Heart left ventricle (tissue), 16 donors: ENCODE measurements at regions of chr7 and their contacts with region 1.

Region 1: GRCh38 chr7:128739048-128739962 is at the start of gene CALU:
- DNase-seq: peak; percentile 97 to 98 (median 98)
- ATAC-seq: peak; percentile 98 to 99 (median 98)
- H3K4me3 ChIP-seq: peak within 1 kb of the TSS; percentile 83 to 99 (median 94)
- H3K27ac ChIP-seq: peak within 1 kb of the TSS; percentile 30 to 98 (median 94)
- H3K4me1 ChIP-seq: peaks cover 7 to 61% (median 47%) of the 10 kb centered on the region in 12 donors
- H3K27me3 ChIP-seq: no peaks in the 10 kb centered on the region
- CTCF ChIP-seq: no peak
- POLR2A ChIP-seq: peak; percentile 88 to 92
- total RNA-seq, gene CALU: 172 to 689 (median 257) TPM

Region 2: DNA sequence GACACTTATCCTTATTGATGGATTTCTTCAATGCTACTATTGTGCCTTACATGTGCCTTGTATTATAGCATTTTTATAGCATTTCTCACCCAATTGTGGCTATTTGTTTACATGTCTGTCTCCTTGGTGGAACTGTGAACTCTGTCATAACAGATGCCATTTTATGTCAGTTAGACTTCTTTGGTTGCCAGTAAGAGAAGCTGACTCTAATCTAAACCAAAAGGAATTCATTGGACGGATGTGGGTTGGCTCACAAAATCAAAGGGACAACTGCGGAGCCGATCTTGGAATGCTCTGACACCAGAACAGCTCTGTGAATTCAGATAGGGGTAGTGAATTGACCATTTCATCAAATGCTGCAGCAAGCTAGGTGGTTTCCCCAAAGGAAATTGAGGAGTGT is 52.2 kb before region 1 on chr7:
- intact Hi-C with region 1: no loop called
- DNase-seq: no peak
- ATAC-seq: no peak
- H3K4me3 ChIP-seq: no peak overlapping the region
- H3K27ac ChIP-seq: no peak overlapping the region
- H3K4me1 ChIP-seq: no peaks in the 10 kb centered on the region
- H3K27me3 ChIP-seq: no peaks in the 10 kb centered on the region
- CTCF ChIP-seq: no peak
- POLR2A ChIP-seq: no peak

Region 3: DNA sequence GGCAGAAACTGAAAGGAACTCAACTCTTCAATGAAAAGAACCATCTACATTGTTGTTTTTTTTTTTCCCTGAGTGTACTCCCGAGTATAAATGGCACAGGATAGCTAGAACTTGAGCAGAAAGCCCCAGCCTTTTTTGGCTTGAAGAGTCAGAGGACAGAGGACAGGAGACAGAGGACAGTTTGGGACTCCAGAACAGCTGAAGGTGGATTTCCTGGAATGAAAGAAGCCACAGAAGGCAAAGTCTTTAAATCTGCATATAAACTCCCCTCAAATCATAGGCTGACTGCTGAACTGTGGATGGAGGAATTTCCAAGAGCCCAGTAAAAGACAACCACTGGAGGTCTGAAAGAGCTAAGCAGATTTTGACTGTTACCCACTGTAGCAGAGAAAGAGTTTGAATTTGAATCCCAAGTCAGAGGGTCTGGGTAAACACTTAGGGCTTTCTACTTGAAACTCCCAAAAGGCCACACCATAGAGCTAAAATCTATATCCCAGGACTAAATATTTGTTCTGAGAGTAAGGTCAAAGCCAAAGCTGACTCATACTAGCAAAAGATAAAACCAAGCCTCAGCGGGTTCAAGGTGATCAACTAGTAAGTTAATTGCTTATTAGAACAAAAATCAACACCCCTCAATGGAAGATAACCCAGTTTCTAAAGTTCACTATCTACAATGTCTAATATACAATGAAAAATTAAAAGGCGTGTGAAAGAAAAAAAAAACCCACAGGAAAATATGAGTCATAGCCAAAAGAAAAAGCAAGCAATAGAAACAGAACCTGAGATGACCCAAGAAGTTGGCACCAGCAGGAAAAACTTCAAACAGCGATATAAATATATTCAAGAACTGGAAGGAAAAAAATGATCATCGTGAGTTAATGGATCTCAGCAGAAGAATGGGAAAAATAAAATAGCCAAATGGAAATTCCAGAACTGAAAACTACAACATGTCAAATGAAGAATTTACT is 38.1 kb after region 1 on chr7:
- intact Hi-C with region 1: no loop called
- DNase-seq: no peak
- ATAC-seq: no peak
- H3K4me3 ChIP-seq: no peak overlapping the region
- H3K27ac ChIP-seq: no peak overlapping the region
- H3K4me1 ChIP-seq: peaks cover 0 to 10% (median 0%) of the 10 kb centered on the region in 12 donors
- H3K27me3 ChIP-seq: no peaks in the 10 kb centered on the region
- CTCF ChIP-seq: no peak
- POLR2A ChIP-seq: no peak

Region 4: GRCh38 chr7:128830231-128831177 is 91.2 kb after region 1 on chr7 and contains the start of gene FLNC:
- intact Hi-C with region 1: loop called in 4 of 10 experiments (anchors 2 to 5 kb)
- DNase-seq: peak; percentile 71 to 81 (median 78)
- ATAC-seq: peak in 2 of 4 donors; percentile 5 to 23
- H3K4me3 ChIP-seq: peak within 1 kb of the TSS; percentile 31 to 94 (median 80)
- H3K27ac ChIP-seq: peak within 1 kb of the TSS; percentile 84 to 100 (median 96)
- H3K4me1 ChIP-seq: peaks cover 0 to 76% (median 45%) of the 10 kb centered on the region in 12 donors
- H3K27me3 ChIP-seq: peaks cover 0 to 31% (median 0%) of the 10 kb centered on the region in 9 donors
- CTCF ChIP-seq: no peak
- POLR2A ChIP-seq: peak; percentile 72 to 96
- total RNA-seq, gene FLNC: 721 to 3,687 (median 1,170) TPM

Region 5: GRCh38 chr7:128862571-128863432 is 123.5 kb after region 1 on chr7 and contains the start of gene ATP6V1F:
- intact Hi-C with region 1: loop called in 6 of 10 experiments (anchors 5 to 10 kb)
- DNase-seq: peak; percentile 97 to 100 (median 98)
- ATAC-seq: peak; percentile 80 to 87 (median 84)
- H3K4me3 ChIP-seq: peak within 1 kb of the TSS; percentile 39 to 91 (median 82)
- H3K27ac ChIP-seq: peak within 1 kb of the TSS in 11 of 12 donors; percentile 47 to 87 (median 73)
- H3K4me1 ChIP-seq: peaks cover 3 to 58% (median 43%) of the 10 kb centered on the region in 12 donors
- H3K27me3 ChIP-seq: no peaks in the 10 kb centered on the region
- CTCF ChIP-seq: peak in 1 of 12 donors; percentile 5
- POLR2A ChIP-seq: peak in 1 of 2 donors; percentile 79
- total RNA-seq, gene ATP6V1F: 91.6 to 165 (median 121) TPM

Region 6: DNA sequence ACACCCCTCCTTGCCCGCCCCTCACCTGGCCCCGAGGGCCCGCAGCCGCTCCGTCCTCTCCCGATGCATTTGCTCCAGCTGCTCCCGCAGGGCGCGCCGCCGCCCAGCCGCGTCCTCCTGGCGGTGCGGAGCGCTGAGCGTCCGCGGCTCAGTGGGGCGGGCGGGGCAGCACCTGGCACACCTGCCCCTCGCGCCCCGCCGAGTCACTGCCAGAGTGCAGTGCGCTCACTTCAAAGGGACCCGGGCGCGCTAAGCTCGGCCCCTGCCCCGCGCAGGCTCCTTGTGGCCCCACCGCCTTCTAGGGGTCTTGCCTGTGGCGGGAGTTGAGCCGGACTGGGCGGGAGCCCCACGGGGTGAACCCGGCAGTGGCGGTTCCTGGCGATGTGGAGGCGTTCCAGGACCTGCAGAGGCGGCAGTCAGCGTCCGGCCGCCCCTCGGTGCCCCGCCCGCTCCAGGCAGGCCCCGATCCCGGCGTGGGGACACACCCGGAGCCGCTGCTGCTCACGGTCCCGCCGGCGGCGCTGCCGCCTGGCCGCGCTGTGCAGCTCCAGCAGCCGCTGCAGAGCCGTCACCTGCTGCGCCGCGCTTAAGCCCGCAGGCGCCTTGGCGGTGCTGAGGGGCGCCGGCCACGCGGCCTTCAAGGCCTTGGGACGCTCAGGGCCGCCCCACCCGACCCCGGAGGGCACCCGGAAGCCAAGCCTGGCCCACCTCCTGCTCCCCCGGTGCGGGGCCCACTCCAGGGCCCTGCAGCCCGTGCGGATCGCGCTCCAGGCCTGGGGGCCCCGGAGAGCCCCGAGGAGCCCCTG is 130.0 kb after region 1 on chr7:
- intact Hi-C with region 1: loop called in 6 of 10 experiments (anchors 5 to 10 kb)
- DNase-seq: peak; percentile 55 to 83 (median 59)
- ATAC-seq: peak; percentile 12 to 75 (median 58)
- H3K4me3 ChIP-seq: peak overlapping the region; percentile 45 to 70 (median 63)
- H3K27ac ChIP-seq: peak overlapping the region in 3 of 12 donors; percentile 15 to 55 (median 38)
- H3K4me1 ChIP-seq: peaks cover 0 to 22% (median 13%) of the 10 kb centered on the region in 12 donors
- H3K27me3 ChIP-seq: peaks cover 0 to 16% (median 0%) of the 10 kb centered on the region in 9 donors
- CTCF ChIP-seq: peak in 7 of 12 donors; percentile 9 to 46 (median 32)
- POLR2A ChIP-seq: no peak

Region 7: DNA sequence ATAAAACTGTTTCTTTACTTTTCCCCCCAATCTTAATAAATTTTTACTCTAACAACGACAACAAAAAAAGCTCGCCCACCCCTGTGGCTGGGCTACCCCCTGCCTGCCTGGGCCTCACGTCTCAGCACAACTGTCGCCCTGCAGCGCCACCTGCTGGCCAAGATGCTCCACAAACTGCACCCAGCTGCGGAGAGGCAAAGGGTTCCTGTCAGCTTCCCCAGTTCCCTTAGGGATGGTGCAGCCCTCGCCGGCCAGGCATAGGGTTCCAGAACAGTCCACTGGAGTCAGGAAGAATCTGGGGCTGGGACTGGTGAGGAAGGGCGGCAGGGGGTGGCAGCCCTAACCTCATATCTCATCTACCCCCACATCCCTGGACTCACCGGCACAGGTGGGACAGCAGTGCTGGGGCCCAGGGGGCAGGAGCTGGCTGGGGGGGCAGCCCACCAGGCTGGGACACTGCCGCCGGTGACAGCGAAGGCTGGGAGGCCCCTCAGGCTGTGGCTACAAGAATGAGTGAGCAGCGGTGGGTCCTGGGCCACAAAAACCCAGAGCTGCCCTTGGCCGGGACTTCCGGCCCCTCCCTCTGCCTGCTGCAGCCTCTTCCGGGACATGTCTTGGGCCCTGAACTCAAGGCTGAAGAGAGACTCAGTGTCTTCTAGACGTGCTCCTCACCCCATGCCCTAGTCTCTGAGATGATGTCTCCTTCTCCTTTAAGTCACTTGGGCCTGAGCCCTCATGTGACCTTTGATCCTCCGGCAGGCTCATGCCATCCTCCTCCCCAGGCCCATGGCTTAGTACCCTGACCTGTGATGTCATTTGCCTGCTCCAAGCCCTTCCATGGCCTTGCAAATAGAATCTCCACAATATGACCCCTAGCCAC is 144.6 kb after region 1 on chr7:
- intact Hi-C with region 1: loop called in 1 of 10 experiments (anchors 5 kb)
- DNase-seq: peak; percentile 77 to 92 (median 83)
- ATAC-seq: peak; percentile 43 to 72 (median 58)
- H3K4me3 ChIP-seq: peak overlapping the region in 3 of 12 donors; percentile 8 to 33 (median 24)
- H3K27ac ChIP-seq: no peak overlapping the region
- H3K4me1 ChIP-seq: peaks cover 0 to 8% (median 0%) of the 10 kb centered on the region in 12 donors
- H3K27me3 ChIP-seq: no peaks in the 10 kb centered on the region
- CTCF ChIP-seq: peak; percentile 89 to 98 (median 96)
- POLR2A ChIP-seq: no peak